ENCODE measurements at regions of chr11 and their contacts with region 1.

Region 1: GRCh38 chr11:129695575-129696308 is 119.9 kb upstream of the TMEM45B start:
- DNase-seq: peak; percentile 28
- H3K4me3 ChIP-seq: peak overlapping the region in 1 of 3 experiments; percentile 15
- H3K27ac ChIP-seq: no peak overlapping the region
- H3K4me1 ChIP-seq: peaks cover 8% of the 10 kb centered on the region
- H3K27me3 ChIP-seq: no peaks in the 10 kb centered on the region
- CTCF ChIP-seq: peak; percentile 57 to 82
- POLR2A ChIP-seq: no peak

Region 2: DNA sequence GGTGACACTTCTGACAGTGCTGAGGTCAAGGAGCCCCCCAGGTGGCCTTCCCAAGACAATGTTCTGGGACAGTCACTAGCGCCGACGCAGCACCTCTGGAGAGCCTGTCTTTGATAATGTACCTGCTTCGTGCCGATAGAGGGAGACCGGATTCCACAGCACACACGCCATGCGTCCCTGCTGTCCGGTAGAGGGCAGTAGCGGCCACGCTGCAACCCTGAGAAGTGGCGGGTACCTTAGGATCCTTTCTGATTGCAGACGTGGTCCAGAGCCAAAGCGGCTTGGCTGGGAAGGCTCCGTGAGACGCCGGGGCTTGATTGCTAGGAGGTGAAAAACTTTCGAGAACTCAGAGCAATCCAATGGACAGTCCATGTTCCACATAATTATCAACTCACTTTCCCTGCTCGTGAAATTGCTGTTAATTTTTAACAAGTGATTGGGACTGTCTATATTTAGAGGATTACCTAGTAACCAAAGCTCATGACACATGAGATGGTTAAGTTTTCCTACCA is 331.5 kb before region 1 on chr11:
- CTCF ChIA-PET with region 1: interaction called, 15 read pairs
- POLR2A ChIA-PET with region 1: no interaction called
- dilution Hi-C with region 1: no loop called
- intact Hi-C with region 1: loop called (anchors 1 kb)
- DNase-seq: peak; percentile 87
- H3K4me3 ChIP-seq: no peak overlapping the region
- H3K27ac ChIP-seq: no peak overlapping the region
- H3K4me1 ChIP-seq: no peaks in the 10 kb centered on the region
- H3K27me3 ChIP-seq: peaks cover 16 to 47% of the 10 kb centered on the region in 2 experiments
- CTCF ChIP-seq: peak; percentile 99 to 100
- POLR2A ChIP-seq: no peak

Region 3: DNA sequence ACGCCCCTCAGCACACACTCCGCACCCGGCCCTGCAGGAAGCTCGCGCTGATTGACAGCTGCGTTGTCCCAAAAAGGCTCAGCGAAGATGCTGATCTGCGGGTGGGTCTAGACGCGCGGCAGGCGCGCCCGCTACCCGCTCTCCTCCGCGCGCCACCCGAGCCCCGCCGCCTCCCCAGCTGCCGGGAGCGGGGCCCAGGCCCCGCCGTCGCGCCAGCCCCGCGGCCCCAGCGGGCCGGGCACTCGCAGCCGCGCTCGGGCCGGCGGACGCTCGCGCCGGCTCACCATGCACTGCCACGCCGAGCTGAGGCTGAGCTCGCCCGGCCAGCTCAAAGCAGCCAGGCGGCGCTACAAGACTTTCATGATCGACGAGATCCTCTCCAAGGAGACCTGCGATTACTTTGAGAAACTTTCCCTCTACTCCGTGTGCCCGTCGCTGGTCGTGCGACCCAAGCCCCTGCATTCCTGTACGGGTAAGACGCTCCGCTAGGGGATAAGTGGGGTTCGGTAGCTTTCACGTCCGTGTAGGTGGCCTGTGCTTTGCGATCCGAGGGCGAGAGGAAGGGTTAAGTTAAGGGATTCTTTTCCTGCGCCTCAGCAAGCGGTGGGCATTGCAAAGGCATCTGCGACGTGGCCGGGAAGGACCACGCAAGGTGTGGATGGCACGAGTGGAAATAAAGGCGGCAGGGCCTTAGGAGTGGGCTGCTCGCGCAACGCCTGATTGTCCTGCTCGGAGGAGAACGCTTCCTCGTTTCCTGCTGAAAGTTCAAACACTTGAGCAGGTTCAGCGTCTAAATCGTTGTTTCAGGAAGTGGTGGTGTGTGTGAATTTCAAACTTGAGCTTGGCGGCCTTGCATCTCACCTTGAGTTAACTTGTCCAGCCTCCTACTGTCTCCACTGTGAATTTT is 319.7 kb before region 1 on chr11 and contains the start of gene BARX2:
- CTCF ChIA-PET with region 1: interaction called, 48 read pairs
- POLR2A ChIA-PET with region 1: no interaction called
- dilution Hi-C with region 1: no loop called
- intact Hi-C with region 1: loop called (anchors 1 kb)
- DNase-seq: peak; percentile 47
- H3K4me3 ChIP-seq: no peak within 1 kb of the TSS
- H3K27ac ChIP-seq: no peak within 1 kb of the TSS
- H3K4me1 ChIP-seq: peaks cover 9% of the 10 kb centered on the region
- H3K27me3 ChIP-seq: peaks cover 59 to 71% of the 10 kb centered on the region in 2 experiments
- CTCF ChIP-seq: peak; percentile 27 to 54
- POLR2A ChIP-seq: no peak
- total RNA-seq, gene BARX2: not detected in 2 replicates

Region 4: DNA sequence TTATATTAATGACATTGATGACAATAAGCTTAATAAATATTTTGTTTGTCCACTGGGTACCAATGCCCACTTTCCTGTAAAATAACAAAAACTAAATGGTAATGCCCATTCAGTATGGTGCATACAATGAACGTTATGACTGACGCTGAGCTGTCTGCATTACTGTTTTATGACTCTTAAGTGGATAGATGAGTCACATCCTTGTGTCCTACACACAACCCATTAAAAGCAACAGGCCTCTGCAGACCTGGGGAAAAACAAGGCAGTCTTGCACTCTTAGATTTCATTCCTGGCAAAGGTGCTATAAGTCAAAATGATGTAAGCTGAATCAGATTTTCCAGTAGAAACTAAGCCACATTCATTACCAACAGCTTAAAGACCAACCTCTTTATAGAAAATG is 56.4 kb before region 1 on chr11:
- CTCF ChIA-PET with region 1: interaction called, 10 read pairs
- POLR2A ChIA-PET with region 1: no interaction called
- dilution Hi-C with region 1: no loop called
- intact Hi-C with region 1: loop called (anchors 2 kb)
- DNase-seq: peak; percentile 94
- H3K4me3 ChIP-seq: no peak overlapping the region
- H3K27ac ChIP-seq: peak overlapping the region; percentile 87
- H3K4me1 ChIP-seq: peaks cover 30% of the 10 kb centered on the region
- H3K27me3 ChIP-seq: no peaks in the 10 kb centered on the region
- CTCF ChIP-seq: no peak
- POLR2A ChIP-seq: no peak

Region 5: GRCh38 chr11:129750349-129751292 is 54.9 kb after region 1 on chr11:
- CTCF ChIA-PET with region 1: interaction called, 4 read pairs
- POLR2A ChIA-PET with region 1: no interaction called
- dilution Hi-C with region 1: no loop called
- intact Hi-C with region 1: loop called (anchors 1 kb)
- DNase-seq: peak; percentile 72
- H3K4me3 ChIP-seq: no peak overlapping the region
- H3K27ac ChIP-seq: no peak overlapping the region
- H3K4me1 ChIP-seq: no peaks in the 10 kb centered on the region
- H3K27me3 ChIP-seq: peaks cover 0 to 4% of the 10 kb centered on the region in 2 experiments
- CTCF ChIP-seq: peak; percentile 96 to 98
- POLR2A ChIP-seq: no peak

Region 6: GRCh38 chr11:129779342-129779741 is 83.6 kb after region 1 on chr11:
- CTCF ChIA-PET with region 1: no interaction called
- POLR2A ChIA-PET with region 1: no interaction called
- dilution Hi-C with region 1: no loop called
- intact Hi-C with region 1: no loop called
- DNase-seq: no peak
- H3K4me3 ChIP-seq: no peak overlapping the region
- H3K27ac ChIP-seq: no peak overlapping the region
- H3K4me1 ChIP-seq: no peaks in the 10 kb centered on the region
- H3K27me3 ChIP-seq: peaks cover 0 to 3% of the 10 kb centered on the region in 2 experiments
- CTCF ChIP-seq: no peak
- POLR2A ChIP-seq: no peak

Measured in endothelial cell of umbilical vein (primary cell).